CD8-positive, alpha-beta T cell (primary cell): ENCODE measurements at regions of chr14 and their contacts with region 1.

Region 1: GRCh38 chr14:61694830-61695694 is at the start of gene HIF1A:
- DNase-seq: peak; percentile 88 to 100 (median 94)
- ATAC-seq: peak; percentile 95
- H3K4me3 ChIP-seq: peak within 1 kb of the TSS; percentile 76 to 87
- H3K4me3 Mint-ChIP-seq: peak within 1 kb of the TSS; percentile 95
- H3K27ac ChIP-seq: peak within 1 kb of the TSS; percentile 83 to 86
- H3K27ac Mint-ChIP-seq: peak within 1 kb of the TSS; percentile 96
- H3K4me1 ChIP-seq: peaks cover 47% of the 10 kb centered on the region
- H3K4me1 Mint-ChIP-seq: peaks cover 59% of the 10 kb centered on the region
- H3K27me3 ChIP-seq: no peaks in the 10 kb centered on the region
- H3K27me3 Mint-ChIP-seq: no peaks in the 10 kb centered on the region
- CTCF ChIP-seq: no peak
- total RNA-seq, gene HIF1A: 335 to 340 TPM

Region 2: GRCh38 chr14:61475316-61475715 is 219.7 kb before region 1 on chr14:
- CTCF ChIA-PET with region 1: interaction called, 4 read pairs
- POLR2A ChIA-PET with region 1: interaction called, 8 read pairs
- intact Hi-C with region 1: loop called in 1 of 2 experiments (anchors 1 kb)
- DNase-seq: peak in 3 of 9 experiments; percentile 39 to 80 (median 69)
- ATAC-seq: no peak
- H3K4me3 ChIP-seq: no peak overlapping the region
- H3K4me3 Mint-ChIP-seq: no peak overlapping the region
- H3K27ac ChIP-seq: peak overlapping the region; percentile 72 to 98
- H3K27ac Mint-ChIP-seq: peak overlapping the region; percentile 97
- H3K4me1 ChIP-seq: peaks cover 95% of the 10 kb centered on the region
- H3K4me1 Mint-ChIP-seq: peaks cover 93% of the 10 kb centered on the region
- H3K27me3 ChIP-seq: no peaks in the 10 kb centered on the region
- H3K27me3 Mint-ChIP-seq: no peaks in the 10 kb centered on the region
- CTCF ChIP-seq: peak; percentile 45

Region 3: DNA sequence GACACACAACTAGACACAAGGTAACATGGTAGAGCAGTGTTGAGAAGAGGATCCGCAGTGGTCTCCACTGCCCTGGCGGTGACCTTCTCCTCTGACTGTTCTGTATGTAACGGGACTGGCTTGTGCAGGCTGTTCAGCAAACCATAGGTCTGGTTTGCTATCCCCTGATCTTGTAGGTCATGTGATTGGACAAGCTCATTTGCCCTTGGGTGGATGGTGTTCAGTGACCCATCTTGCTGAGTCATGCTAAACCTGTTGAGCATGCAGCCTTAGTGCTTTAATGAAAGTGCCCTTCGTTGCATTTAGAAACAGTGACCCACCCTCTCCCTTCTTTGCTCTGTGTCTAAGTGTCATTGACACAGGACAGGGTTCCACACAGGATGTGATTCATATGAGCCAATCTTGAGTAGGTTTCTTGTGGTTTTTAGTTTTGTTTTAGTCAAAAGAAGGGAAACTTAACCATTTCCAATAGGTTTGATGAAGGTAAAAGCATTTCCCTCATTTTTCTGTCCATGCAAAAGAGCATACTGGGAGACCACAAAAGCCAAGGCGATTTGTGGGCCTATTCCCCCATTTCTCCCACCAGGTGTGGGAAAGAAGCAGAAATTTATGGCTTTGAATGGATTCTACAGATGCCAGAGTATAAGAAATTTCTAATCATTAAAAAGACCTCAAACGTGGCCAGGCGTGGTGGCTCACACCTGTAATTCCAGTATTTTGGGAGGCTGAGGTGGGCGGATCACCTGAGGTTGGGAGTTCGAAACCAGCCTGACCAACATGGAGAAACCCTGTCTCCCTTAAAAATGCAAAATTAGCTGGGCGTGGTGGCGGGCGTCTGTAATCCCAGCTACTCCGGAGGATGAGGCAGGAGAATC is 32.4 kb before region 1 on chr14:
- CTCF ChIA-PET with region 1: interaction called, 3 read pairs
- POLR2A ChIA-PET with region 1: interaction called, 3 read pairs
- intact Hi-C with region 1: loop called in 1 of 2 experiments (anchors 1 kb)
- DNase-seq: peak; percentile 14 to 89 (median 48)
- ATAC-seq: peak; percentile 86
- H3K4me3 ChIP-seq: peak overlapping the region; percentile 2 to 32
- H3K4me3 Mint-ChIP-seq: peak overlapping the region; percentile 76
- H3K27ac ChIP-seq: peak overlapping the region; percentile 10 to 74
- H3K27ac Mint-ChIP-seq: peak overlapping the region; percentile 93
- H3K4me1 ChIP-seq: peaks cover 55% of the 10 kb centered on the region
- H3K4me1 Mint-ChIP-seq: peaks cover 56% of the 10 kb centered on the region
- H3K27me3 ChIP-seq: no peaks in the 10 kb centered on the region
- H3K27me3 Mint-ChIP-seq: no peaks in the 10 kb centered on the region
- CTCF ChIP-seq: no peak

Region 4: DNA sequence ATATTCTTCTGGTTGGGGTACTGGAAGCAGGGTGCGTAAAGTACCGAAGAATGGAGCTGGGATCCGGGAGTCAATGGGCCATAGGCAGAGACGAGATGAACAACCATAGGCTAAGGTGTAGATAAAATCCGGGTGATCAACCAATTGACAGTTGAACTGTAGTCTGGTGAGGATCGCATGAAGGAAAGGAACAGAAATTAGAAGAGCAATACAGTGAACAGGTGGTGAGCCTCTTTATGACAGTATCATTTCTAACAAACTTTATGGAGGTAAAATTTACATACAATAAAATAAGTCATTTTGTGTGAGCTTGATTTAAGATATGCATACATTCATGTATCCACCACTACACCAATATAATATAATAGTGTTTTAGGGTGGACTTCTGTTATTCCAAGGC is 13.6 kb before region 1 on chr14:
- CTCF ChIA-PET with region 1: interaction called, 7 read pairs
- POLR2A ChIA-PET with region 1: interaction called, 10 read pairs
- intact Hi-C with region 1: no loop called
- DNase-seq: no peak
- ATAC-seq: no peak
- H3K4me3 ChIP-seq: no peak overlapping the region
- H3K4me3 Mint-ChIP-seq: no peak overlapping the region
- H3K27ac ChIP-seq: no peak overlapping the region
- H3K27ac Mint-ChIP-seq: no peak overlapping the region
- H3K4me1 ChIP-seq: peaks cover 8% of the 10 kb centered on the region
- H3K4me1 Mint-ChIP-seq: peaks cover 5% of the 10 kb centered on the region
- H3K27me3 ChIP-seq: no peaks in the 10 kb centered on the region
- H3K27me3 Mint-ChIP-seq: no peaks in the 10 kb centered on the region
- CTCF ChIP-seq: no peak

Region 5: DNA sequence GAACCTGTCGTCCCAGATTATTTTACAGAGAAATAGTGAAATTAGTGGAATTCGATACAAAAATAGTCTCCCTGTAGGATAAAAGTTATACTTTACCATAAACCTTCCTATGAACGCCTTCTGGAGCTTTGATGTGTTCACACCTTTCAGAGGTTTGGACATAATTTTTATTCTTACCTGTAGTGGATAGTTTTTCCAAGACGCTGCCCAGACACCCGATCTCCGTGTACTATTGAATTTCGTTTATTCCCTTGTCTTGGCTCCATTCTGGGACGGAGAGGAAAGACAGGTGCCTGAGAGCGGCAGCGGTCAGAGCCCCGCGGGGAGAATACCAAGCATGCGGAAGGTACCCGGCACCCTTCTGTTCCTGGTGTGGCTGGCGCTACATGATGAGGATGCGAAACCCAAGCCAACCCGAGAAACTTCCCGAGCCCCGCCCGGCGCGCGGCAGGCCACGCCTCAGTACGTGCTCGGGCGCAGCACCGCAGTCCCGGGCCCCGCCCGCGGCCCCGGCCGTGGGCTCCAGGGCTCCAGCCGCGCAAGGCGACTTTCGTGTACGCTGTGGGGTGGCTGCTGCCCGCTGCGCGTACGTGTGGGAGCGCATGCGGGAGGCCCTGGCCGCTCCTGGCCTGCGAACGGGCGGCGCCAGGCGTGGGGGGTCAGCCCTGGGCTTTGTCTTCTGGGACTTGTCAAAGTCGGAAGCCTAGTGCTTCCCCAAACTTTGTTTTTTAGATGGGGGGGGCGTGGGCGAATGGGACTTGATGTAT is 55.8 kb after region 1 on chr14:
- CTCF ChIA-PET with region 1: no interaction called
- POLR2A ChIA-PET with region 1: no interaction called
- intact Hi-C with region 1: no loop called
- DNase-seq: peak; percentile 44 to 90 (median 74)
- ATAC-seq: peak; percentile 96
- H3K4me3 ChIP-seq: peak overlapping the region; percentile 53 to 73
- H3K4me3 Mint-ChIP-seq: peak overlapping the region; percentile 88
- H3K27ac ChIP-seq: peak overlapping the region; percentile 43 to 45
- H3K27ac Mint-ChIP-seq: peak overlapping the region; percentile 80
- H3K4me1 ChIP-seq: peaks cover 4% of the 10 kb centered on the region
- H3K4me1 Mint-ChIP-seq: peaks cover 8% of the 10 kb centered on the region
- H3K27me3 ChIP-seq: no peaks in the 10 kb centered on the region
- H3K27me3 Mint-ChIP-seq: peaks cover 2% of the 10 kb centered on the region
- CTCF ChIP-seq: no peak

Region 6: GRCh38 chr14:61761959-61762786 is 67.1 kb after region 1 on chr14 and contains the start of gene SNAPC1:
- CTCF ChIA-PET with region 1: no interaction called
- POLR2A ChIA-PET with region 1: interaction called, 6 read pairs
- intact Hi-C with region 1: loop called (anchors 1 to 2 kb)
- DNase-seq: peak; percentile 96 to 100 (median 98)
- ATAC-seq: peak; percentile 91
- H3K4me3 ChIP-seq: peak within 1 kb of the TSS; percentile 87 to 90
- H3K4me3 Mint-ChIP-seq: peak within 1 kb of the TSS; percentile 98
- H3K27ac ChIP-seq: peak within 1 kb of the TSS; percentile 84 to 95
- H3K27ac Mint-ChIP-seq: peak within 1 kb of the TSS; percentile 100
- H3K4me1 ChIP-seq: peaks cover 31% of the 10 kb centered on the region
- H3K4me1 Mint-ChIP-seq: peaks cover 48% of the 10 kb centered on the region
- H3K27me3 ChIP-seq: no peaks in the 10 kb centered on the region
- H3K27me3 Mint-ChIP-seq: no peaks in the 10 kb centered on the region
- CTCF ChIP-seq: no peak
- total RNA-seq, gene SNAPC1: 6.8 to 7.4 TPM

Region 7: DNA sequence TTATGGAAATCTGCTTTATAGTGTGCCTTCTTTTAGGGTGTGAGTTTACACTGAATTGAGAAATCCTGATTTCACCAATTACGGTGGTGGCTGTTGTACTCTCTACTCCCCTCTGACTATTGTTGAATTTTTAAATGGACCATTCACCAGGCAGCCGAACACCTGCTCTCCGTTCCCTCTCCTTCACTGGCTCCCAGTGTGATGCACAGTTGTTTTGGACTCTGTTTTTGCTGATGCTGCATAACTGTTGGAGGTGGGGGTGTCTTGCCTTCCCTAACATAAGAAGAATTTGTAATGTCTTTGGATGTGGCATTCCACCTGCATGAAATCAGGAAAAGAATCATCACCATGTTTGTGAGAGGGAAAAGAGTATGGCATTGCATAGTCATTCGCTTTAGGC is 408.4 kb after region 1 on chr14:
- CTCF ChIA-PET with region 1: no interaction called
- POLR2A ChIA-PET with region 1: no interaction called
- intact Hi-C with region 1: no loop called
- DNase-seq: no peak
- ATAC-seq: no peak
- H3K4me3 ChIP-seq: no peak overlapping the region
- H3K4me3 Mint-ChIP-seq: no peak overlapping the region
- H3K27ac ChIP-seq: no peak overlapping the region
- H3K27ac Mint-ChIP-seq: no peak overlapping the region
- H3K4me1 ChIP-seq: no peaks in the 10 kb centered on the region
- H3K4me1 Mint-ChIP-seq: peaks cover 8% of the 10 kb centered on the region
- H3K27me3 ChIP-seq: no peaks in the 10 kb centered on the region
- H3K27me3 Mint-ChIP-seq: peaks cover 2% of the 10 kb centered on the region
- CTCF ChIP-seq: no peak